Dendritic cell treated with granulocyte-macrophage colony-stimulating factor and Interleukin-4, amounts not matched to agents 40 ng/mL and 50 ng/mL, for 4 days (primary cell): ENCODE measurements at regions of chr7 and their contacts with region 1.

Region 1: DNA sequence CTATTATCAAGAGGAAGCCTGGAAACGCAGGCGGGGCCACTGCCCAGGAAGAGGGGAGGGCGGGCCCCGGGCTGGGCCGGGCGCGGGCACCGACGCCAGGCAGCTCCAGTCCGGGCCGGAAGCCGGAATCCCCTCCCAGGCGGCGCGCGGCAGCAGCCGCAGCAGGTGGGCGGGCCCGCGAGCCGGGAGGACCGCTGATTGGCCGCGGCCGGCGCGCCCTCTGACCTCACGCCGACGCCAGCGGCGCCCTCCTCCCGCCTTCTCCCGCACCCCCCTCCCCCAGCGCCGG is 438 bp downstream of the BCL7B start:
- H3K4me3 Mint-ChIP-seq: peak overlapping the region; percentile 94
- H3K27ac Mint-ChIP-seq: peak overlapping the region; percentile 97
- H3K4me1 Mint-ChIP-seq: peaks cover 46% of the 10 kb centered on the region
- H3K27me3 Mint-ChIP-seq: peaks cover 4% of the 10 kb centered on the region

Region 2: DNA sequence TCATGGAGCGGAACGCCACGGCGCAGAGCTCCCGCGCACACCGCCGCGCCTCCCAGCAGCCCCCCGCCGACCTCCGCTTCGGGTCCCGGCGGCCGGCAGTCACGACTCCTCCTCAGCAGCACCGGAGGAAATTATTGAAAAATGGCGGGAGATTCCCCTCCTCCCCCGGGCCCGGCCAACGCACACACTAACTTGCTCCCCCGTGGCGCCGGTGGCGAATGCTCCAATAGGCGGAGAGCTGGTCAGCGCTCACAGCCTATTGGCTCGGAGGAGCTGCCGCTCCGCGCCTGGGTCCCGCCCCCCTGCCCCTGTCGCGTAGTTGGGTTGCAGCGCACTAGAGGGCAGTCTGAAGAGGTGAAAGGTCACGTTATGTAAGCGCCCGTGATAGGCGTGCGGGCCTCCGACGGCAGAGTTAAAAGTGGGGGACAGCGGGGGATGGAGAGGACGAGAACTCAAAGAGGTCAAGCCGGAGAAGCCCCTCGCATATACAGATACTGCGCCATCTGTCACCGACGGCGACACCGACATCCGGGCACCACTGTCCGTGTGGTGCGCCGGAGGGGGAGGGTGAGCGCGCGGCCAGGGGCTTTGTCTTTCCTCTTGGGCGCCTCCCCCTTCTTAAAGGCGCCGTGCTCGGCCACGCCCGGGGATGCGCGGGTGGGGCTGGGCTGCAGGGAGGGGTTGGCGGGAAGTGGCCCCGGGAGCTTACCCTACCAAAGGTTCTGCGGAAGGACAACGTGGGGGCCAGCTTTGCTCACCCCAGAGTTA is 34.8 kb before region 1 on chr7 and contains the start of gene BAZ1B:
- intact Hi-C with region 1: loop called (anchors 1 kb)
- H3K4me3 Mint-ChIP-seq: peak within 1 kb of the TSS; percentile 83
- H3K27ac Mint-ChIP-seq: peak within 1 kb of the TSS; percentile 96
- H3K4me1 Mint-ChIP-seq: peaks cover 60% of the 10 kb centered on the region
- H3K27me3 Mint-ChIP-seq: no peaks in the 10 kb centered on the region